Activated naive CD4-positive, alpha-beta T cell treated with anti-CD3 and anti-CD28 coated beads, Interleukin-2, amount 10 ng/mL, durations not matched to agents 7 days and 5 days (primary cell): ENCODE measurements at regions of chr1 and their contacts with region 1.

Region 1: DNA sequence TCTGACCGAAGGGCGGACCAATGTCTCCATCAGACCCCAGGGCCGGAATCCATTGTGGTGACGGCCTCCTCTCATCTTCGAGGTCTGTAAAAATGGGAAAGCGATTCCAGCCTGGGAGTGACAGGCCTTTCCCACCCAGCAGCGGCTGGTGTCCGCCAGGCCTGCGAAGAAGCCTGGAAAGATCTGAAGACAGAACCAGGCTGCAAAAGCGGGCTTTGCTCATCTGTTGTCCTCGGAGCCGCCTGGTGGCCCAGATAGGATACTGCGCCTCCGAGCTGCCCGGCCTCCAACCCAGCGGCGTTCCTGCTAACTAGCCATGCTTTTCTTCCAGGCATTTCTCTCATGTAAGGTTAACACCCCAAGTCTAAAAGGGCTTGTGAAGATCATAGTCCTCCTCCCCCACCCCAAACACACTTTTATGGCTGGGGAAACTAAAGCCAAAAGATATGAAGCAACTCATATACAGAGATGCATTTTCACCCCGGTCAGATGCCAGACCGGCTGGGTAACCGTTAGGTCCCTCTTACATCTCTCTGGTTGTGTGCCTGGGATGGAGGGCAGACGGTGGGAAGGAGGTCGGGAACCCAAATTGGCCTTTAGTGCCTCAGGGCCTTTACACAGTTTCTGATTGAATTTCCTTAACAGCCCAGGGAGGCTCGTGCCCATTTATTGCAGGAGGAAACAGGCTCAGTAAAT is 1.9 kb upstream of the DHRS3 start:
- DNase-seq: peak; percentile 84
- H3K4me3 Mint-ChIP-seq: peak overlapping the region; percentile 98
- H3K27ac Mint-ChIP-seq: peak overlapping the region; percentile 85
- H3K4me1 Mint-ChIP-seq: peaks cover 51% of the 10 kb centered on the region
- H3K27me3 Mint-ChIP-seq: peaks cover 43% of the 10 kb centered on the region

Region 2: DNA sequence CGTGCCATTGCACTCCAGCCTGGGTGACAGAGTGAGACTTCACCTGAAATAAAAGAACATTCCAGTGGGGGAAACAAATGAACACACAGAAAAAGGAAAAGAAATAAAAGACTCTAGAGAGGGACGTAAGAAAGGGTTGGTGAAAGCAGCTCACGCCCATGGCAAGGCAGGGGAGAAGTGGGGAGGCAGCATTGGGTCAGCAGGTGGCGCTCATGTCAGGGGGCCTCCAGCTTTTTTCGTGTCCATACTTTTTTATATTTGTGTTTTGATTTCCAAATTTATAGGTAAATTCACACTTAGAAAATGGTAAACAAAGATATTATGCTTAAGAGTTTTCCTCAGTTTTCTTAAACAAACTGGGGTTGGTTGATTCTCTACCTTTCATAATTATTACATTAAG is 344.6 kb before region 1 on chr1:
- CTCF ChIA-PET with region 1: interaction called, 42 read pairs
- DNase-seq: peak; percentile 61
- H3K4me3 Mint-ChIP-seq: no peak overlapping the region
- H3K27ac Mint-ChIP-seq: no peak overlapping the region
- H3K4me1 Mint-ChIP-seq: no peaks in the 10 kb centered on the region
- H3K27me3 Mint-ChIP-seq: no peaks in the 10 kb centered on the region

Region 3: GRCh38 chr1:12314333-12314903 is 305.5 kb before region 1 on chr1:
- CTCF ChIA-PET with region 1: interaction called, 53 read pairs
- DNase-seq: no peak
- H3K4me3 Mint-ChIP-seq: no peak overlapping the region
- H3K27ac Mint-ChIP-seq: no peak overlapping the region
- H3K4me1 Mint-ChIP-seq: peaks cover 3% of the 10 kb centered on the region
- H3K27me3 Mint-ChIP-seq: no peaks in the 10 kb centered on the region

Region 4: DNA sequence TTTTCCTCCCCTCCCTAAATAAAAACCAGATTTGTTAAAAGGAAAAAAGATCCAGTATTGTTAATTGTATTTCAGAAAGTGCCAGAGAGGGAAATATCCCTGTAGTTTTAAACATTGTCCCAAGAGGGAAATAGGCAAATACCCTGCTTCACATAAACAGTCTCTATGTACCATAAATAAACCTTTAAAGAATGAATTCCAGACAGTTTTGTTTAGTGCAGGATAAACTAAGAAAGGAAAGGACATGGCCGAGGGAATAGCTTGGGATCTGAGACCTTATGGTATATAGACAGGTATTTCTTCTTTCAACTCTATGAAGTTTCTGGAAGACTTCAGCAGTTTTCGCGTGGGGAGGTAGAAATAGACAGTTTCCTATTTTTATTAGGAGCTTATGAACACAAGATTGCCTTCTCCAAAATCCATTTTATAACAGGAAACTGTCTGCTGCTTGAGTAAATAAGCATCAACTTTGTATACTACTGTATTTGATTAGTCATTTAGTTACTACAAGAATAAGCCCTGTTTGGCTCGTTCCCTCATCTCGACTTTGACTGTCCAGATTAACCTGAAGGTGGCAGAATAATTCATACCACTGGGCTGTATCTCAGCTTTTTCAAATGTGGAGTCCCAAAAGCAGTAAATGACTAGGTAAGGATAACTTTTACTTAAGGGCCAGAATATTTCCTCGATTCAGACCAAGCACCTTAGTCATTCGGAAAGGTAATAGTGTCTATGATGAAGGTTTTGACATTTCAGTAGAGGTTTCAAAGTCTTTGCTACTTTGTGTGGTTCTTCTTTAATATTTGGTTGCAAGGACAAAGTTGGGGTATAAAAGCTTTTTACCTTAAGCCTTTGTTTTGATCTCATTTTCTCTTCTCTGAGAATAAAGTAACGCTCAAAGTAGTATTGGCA is 212.6 kb before region 1 on chr1:
- CTCF ChIA-PET with region 1: interaction called, 12 read pairs
- DNase-seq: peak; percentile 26
- H3K4me3 Mint-ChIP-seq: no peak overlapping the region
- H3K27ac Mint-ChIP-seq: no peak overlapping the region
- H3K4me1 Mint-ChIP-seq: peaks cover 51% of the 10 kb centered on the region
- H3K27me3 Mint-ChIP-seq: no peaks in the 10 kb centered on the region

Region 5: GRCh38 chr1:12604114-12604874 is 15.6 kb before region 1 on chr1:
- CTCF ChIA-PET with region 1: interaction called, 21 read pairs
- DNase-seq: peak; percentile 80
- H3K4me3 Mint-ChIP-seq: peak overlapping the region; percentile 27
- H3K27ac Mint-ChIP-seq: peak overlapping the region; percentile 88
- H3K4me1 Mint-ChIP-seq: peaks cover 64% of the 10 kb centered on the region
- H3K27me3 Mint-ChIP-seq: peaks cover 12% of the 10 kb centered on the region

Region 6: GRCh38 chr1:12658531-12659453 is 38.9 kb after region 1 on chr1:
- CTCF ChIA-PET with region 1: interaction called, 18 read pairs
- DNase-seq: peak; percentile 81
- H3K4me3 Mint-ChIP-seq: no peak overlapping the region
- H3K27ac Mint-ChIP-seq: peak overlapping the region; percentile 0
- H3K4me1 Mint-ChIP-seq: peaks cover 8% of the 10 kb centered on the region
- H3K27me3 Mint-ChIP-seq: peaks cover 35% of the 10 kb centered on the region